ENCODE measurements at regions of chr2 and their contacts with region 1.

Region 1: DNA sequence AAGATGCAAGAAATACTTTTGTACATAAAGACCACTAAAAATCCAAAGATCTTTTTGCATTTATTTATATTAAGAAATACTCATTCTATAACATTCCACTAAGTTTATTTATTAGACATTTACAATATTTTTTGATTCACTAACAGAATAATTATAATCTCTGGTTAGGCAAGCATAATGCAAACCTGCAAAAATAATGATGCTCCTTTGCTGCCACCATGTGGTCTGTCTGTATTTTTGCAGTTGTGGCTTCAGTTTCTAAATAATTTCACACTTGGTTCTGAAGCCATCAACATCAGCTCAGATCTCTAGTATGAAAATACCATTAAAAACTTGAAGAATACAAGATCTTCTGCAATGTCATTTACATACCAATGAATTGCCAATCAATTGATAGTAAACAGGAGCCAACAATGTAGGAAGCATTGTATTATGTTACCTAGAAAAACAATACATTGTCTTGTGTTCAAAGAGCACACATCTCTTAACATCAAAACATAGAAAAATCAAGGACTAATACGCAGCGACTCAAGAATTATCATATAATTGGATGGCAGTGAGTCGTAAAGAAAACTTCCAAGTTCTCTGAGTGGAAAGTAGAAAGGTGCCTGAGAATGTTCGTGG is 28.8 kb upstream of the WDR75 start:
- DNase-seq: no peak
- ATAC-seq: no peak
- H3K4me3 Mint-ChIP-seq: no peak overlapping the region
- H3K27ac Mint-ChIP-seq: no peak overlapping the region
- H3K4me1 Mint-ChIP-seq: no peaks in the 10 kb centered on the region
- H3K27me3 Mint-ChIP-seq: no peaks in the 10 kb centered on the region
- CTCF ChIP-seq: no peak

Region 2: GRCh38 chr2:187581125-187581896 is 1831.1 kb before region 1 on chr2:
- CTCF ChIA-PET with region 1: no interaction called
- POLR2A ChIA-PET with region 1: no interaction called
- intact Hi-C with region 1: loop called (anchors 2 kb)
- DNase-seq: no peak
- ATAC-seq: no peak
- H3K4me3 Mint-ChIP-seq: no peak overlapping the region
- H3K27ac Mint-ChIP-seq: no peak overlapping the region
- H3K4me1 Mint-ChIP-seq: no peaks in the 10 kb centered on the region
- H3K27me3 Mint-ChIP-seq: no peaks in the 10 kb centered on the region
- CTCF ChIP-seq: peak; percentile 46

Region 3: DNA sequence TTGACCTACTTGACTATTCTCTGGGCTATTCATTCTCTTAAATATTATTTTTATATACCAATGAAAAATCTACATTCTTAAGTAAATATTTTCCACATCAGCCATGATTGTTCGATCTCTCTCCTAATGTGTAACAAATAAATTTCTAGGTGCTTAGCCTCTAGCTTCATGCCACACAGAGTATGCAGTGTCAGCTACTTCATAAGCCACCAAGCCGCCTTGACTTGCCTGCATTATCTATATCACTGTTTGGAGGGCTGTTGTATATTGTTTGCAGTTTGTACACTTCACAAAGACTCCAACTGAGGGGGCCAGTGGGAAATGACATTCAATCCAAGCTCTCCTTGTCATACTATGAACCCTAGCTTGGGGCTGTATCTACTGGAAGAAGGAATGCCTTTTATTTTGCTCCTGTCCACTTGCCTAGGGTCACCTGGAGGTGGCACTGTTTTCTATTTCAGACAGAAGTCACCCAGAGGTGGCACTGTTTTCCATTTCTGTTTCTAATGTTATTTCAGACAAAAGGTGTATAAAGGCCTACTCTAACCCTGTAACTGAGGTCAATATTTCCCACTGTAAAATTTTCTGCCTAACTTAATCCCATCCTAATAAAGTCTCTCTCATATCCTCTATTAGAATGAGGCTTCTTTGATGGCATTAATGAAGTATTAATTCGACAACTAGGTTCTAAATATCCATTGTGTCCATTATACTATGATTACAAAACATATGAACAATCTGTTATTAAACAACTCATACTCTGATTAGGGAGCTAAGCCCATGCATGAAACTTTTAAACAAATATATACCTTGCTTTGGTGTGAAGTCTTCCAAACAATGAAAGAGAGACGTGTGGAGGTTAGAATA is 269.3 kb before region 1 on chr2:
- CTCF ChIA-PET with region 1: interaction called, 3 read pairs
- POLR2A ChIA-PET with region 1: no interaction called
- intact Hi-C with region 1: loop called (anchors 2 kb)
- DNase-seq: no peak
- ATAC-seq: no peak
- H3K4me3 Mint-ChIP-seq: no peak overlapping the region
- H3K27ac Mint-ChIP-seq: no peak overlapping the region
- H3K4me1 Mint-ChIP-seq: no peaks in the 10 kb centered on the region
- H3K27me3 Mint-ChIP-seq: no peaks in the 10 kb centered on the region
- CTCF ChIP-seq: no peak

Measured in activated B cell treated with CpG ODN at 0.5 μM for 24 hours (primary cell).